Dendritic cell treated with granulocyte-macrophage colony-stimulating factor and Interleukin-4, amounts not matched to agents 40 ng/mL and 50 ng/mL, for 4 days (primary cell): ENCODE measurements at regions of chr1 and their contacts with region 1.

Region 1: GRCh38 chr1:231806623-231807495 is 180.3 kb downstream of the DISC1 start:
- H3K4me3 Mint-ChIP-seq: no peak overlapping the region
- H3K27ac Mint-ChIP-seq: peak overlapping the region; percentile 91
- H3K4me1 Mint-ChIP-seq: peaks cover 66% of the 10 kb centered on the region
- H3K27me3 Mint-ChIP-seq: no peaks in the 10 kb centered on the region

Region 2: GRCh38 chr1:231626535-231626945 is 180.3 kb before region 1 on chr1 and contains the start of gene DISC1:
- intact Hi-C with region 1: loop called (anchors 5 kb)
- H3K4me3 Mint-ChIP-seq: peak within 1 kb of the TSS; percentile 81
- H3K27ac Mint-ChIP-seq: peak within 1 kb of the TSS; percentile 84
- H3K4me1 Mint-ChIP-seq: peaks cover 57% of the 10 kb centered on the region
- H3K27me3 Mint-ChIP-seq: peaks cover 3% of the 10 kb centered on the region

Region 3: DNA sequence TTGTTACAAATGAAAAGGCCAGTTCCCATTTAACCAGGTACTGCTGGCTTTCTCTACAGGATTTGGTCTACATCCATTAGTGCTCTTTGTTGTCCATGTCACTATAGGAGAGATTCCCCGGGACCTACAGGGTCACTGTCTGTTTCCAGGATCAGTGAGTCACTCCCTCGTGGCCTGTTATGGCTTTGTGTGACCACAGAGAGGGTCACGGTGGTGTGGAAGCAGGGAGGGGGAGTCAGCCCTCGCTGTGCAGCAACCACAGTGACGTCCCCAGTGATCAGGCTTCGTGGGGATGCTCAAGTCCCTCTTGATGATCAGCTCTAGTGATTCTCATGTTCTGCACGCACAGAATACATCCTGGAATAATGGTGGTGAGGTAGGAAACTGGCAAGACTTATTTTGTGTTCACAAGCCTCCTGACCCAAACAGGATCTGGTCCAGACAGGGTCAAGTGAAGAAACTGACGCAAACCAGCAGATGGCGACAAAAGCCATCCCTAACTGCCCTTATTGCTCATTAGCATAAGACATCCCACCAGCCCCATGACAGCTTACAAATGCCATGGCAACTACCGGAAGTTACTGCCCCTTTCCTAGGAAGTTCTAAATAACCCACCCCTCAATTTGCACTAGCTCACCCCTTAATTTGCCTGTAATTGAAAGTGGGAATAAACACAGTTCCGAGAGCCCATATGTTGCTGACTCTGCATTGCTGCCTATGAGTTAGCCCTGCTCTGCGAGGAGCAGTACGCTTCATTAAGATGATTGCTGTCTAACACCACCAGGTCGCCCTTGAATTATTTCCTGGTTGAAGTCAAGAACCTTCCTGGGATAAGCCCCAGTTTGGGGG is 81.8 kb before region 1 on chr1:
- intact Hi-C with region 1: loop called (anchors 1 kb)
- H3K4me3 Mint-ChIP-seq: no peak overlapping the region
- H3K27ac Mint-ChIP-seq: peak overlapping the region; percentile 70
- H3K4me1 Mint-ChIP-seq: peaks cover 28% of the 10 kb centered on the region
- H3K27me3 Mint-ChIP-seq: no peaks in the 10 kb centered on the region

Region 4: GRCh38 chr1:231757101-231757404 is 49.8 kb before region 1 on chr1:
- intact Hi-C with region 1: loop called (anchors 1 kb)
- H3K4me3 Mint-ChIP-seq: no peak overlapping the region
- H3K27ac Mint-ChIP-seq: peak overlapping the region; percentile 55
- H3K4me1 Mint-ChIP-seq: peaks cover 8% of the 10 kb centered on the region
- H3K27me3 Mint-ChIP-seq: no peaks in the 10 kb centered on the region

Region 5: DNA sequence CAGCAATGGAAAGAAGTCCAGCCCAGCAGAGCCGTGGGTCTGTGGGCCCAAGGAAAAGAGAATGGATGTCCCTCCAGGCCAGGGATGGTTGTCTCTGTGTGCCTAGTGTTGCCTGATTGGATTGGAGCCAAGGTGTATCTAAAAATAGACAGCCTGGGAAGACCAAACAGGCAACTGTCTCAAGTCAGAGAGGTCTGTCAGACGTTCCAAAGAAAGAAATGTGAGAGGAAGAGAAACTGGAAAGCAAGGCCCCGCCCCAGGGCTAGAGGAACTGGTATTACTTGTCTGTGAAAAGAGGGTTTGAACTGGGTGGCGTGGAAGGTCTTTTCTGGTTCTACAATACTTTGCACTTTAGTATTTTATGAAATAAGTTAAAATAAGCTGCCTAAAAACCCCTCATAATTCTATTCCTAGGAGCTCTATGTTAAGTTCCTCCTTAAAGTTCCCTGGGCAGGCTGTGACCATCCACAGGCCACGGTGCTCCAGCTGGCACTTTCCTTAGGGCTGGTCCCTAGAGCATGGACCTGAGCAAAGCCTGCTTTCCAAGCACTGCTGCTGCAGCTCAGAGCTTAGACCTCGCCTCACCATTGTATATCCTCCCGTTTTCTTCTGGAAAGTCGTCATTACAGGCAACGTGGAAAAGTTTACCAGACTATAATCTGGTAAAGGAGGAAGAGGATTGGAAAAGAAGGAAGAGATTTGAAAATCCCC is 28.7 kb before region 1 on chr1:
- intact Hi-C with region 1: loop called (anchors 1 kb)
- H3K4me3 Mint-ChIP-seq: peak overlapping the region; percentile 32
- H3K27ac Mint-ChIP-seq: peak overlapping the region; percentile 94
- H3K4me1 Mint-ChIP-seq: peaks cover 81% of the 10 kb centered on the region
- H3K27me3 Mint-ChIP-seq: no peaks in the 10 kb centered on the region